ENCODE measurements at regions of chr10 and their contacts with region 1.

Region 1: GRCh38 chr10:87861953-87862678 is 1.2 kb downstream of the KLLN start:
- DNase-seq: peak; percentile 85 to 95 (median 93)
- ATAC-seq: peak; percentile 86
- H3K4me3 ChIP-seq: peak overlapping the region; percentile 90
- H3K4me3 Mint-ChIP-seq: peak overlapping the region; percentile 91 to 100 (median 96)
- H3K27ac ChIP-seq: peak overlapping the region; percentile 75
- H3K27ac Mint-ChIP-seq: peak overlapping the region; percentile 90 to 99 (median 97)
- H3K4me1 ChIP-seq: peaks cover 6 to 16% of the 10 kb centered on the region in 2 donors
- H3K4me1 Mint-ChIP-seq: peaks cover 25 to 36% (median 32%) of the 10 kb centered on the region in 7 donors
- H3K27me3 ChIP-seq: no peaks in the 10 kb centered on the region
- H3K27me3 Mint-ChIP-seq: no peaks in the 10 kb centered on the region

Region 2: GRCh38 chr10:87817609-87818504 is 44.3 kb before region 1 on chr10 and contains the start of gene ATAD1:
- CTCF ChIA-PET with region 1: interaction called, 5 read pairs
- POLR2A ChIA-PET with region 1: interaction called, 72 read pairs
- intact Hi-C with region 1: loop called (anchors 1 kb)
- DNase-seq: peak; percentile 79 to 93 (median 91)
- ATAC-seq: peak; percentile 92
- H3K4me3 ChIP-seq: peak within 1 kb of the TSS; percentile 75
- H3K4me3 Mint-ChIP-seq: peak within 1 kb of the TSS; percentile 90 to 100 (median 94)
- H3K27ac ChIP-seq: peak within 1 kb of the TSS; percentile 89
- H3K27ac Mint-ChIP-seq: peak within 1 kb of the TSS; percentile 93 to 100 (median 98)
- H3K4me1 ChIP-seq: peaks cover 13 to 33% of the 10 kb centered on the region in 2 donors
- H3K4me1 Mint-ChIP-seq: peaks cover 22 to 56% (median 41%) of the 10 kb centered on the region in 7 donors
- H3K27me3 ChIP-seq: no peaks in the 10 kb centered on the region
- H3K27me3 Mint-ChIP-seq: peaks cover 0 to 2% (median 0%) of the 10 kb centered on the region in 5 donors
- total RNA-seq, gene ATAD1: 33.5 to 53.4 (median 46.1) TPM

Region 3: DNA sequence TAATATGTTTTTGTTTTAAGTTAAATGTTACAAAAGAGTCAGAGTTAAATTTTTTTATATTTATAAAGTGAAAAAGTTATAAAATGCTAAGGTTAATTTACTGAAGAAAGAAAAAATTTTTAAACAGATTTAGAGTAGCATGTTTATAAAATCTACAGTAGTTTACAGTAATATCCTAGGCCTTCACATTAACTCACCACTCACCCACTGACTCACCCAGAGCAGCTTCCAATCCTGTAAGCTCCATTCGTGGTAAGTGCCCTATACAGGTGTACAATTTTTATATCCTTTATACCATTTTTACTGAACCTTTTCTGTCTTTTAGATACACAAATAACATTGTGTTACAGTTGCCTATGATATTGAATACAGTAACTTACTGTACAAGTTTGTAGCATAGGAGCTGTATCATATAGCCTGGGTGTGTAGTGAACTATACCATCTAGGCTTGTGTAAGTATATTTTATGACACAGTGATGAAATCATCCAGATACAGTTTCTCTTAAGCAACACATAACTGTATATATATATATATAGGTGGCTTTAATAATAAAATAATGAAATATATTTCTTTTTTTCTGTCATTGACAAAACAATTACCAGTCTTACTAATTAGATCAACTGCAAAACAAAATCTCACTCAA is 80.9 kb after region 1 on chr10:
- CTCF ChIA-PET with region 1: no interaction called
- POLR2A ChIA-PET with region 1: interaction called, 5 read pairs
- intact Hi-C with region 1: loop called (anchors 5 kb)
- DNase-seq: no peak
- ATAC-seq: no peak
- H3K4me3 ChIP-seq: no peak overlapping the region
- H3K4me3 Mint-ChIP-seq: no peak overlapping the region
- H3K27ac ChIP-seq: no peak overlapping the region
- H3K27ac Mint-ChIP-seq: no peak overlapping the region
- H3K4me1 ChIP-seq: no peaks in the 10 kb centered on the region
- H3K4me1 Mint-ChIP-seq: peaks cover 4 to 50% (median 40%) of the 10 kb centered on the region in 7 donors
- H3K27me3 ChIP-seq: no peaks in the 10 kb centered on the region
- H3K27me3 Mint-ChIP-seq: no peaks in the 10 kb centered on the region

Region 4: DNA sequence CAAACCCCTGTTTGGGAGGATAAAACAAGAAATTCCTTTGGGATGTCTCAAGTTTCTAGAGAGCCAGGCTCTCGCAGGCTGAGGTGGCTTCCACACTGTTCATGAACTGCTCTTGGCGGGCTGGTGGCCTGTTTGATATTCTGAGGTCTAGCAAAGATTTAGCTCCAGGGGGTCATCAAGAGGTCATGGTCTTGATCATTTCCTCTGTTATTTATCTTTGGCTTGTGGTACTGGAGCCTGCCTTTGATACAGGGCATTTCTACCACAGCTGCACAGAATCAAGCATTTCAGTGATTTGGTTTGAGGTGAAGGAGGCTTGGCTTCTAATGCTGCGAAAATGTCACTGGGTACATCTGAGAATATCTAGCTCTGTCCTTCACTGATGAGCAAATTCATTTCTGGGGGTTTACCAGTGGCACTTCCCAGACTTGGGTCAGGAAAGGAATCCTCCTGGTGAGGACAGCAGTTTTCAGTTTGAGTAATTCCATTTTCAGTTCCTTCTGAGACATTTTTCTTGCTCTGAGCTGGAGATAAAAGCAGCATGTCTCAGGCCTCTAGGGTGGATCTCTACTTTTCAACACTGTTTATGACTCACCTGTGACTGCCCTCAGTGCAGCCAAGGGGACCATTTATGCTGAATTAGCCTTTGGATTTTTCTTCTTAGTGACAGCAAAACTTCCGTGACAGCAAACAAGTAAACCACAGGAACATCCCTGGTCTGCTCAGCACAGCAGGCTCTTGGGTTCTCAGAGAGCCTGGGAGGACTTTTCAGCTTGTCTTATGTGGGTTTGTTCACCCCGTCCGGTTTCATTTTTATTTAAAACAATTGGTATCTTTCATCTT is 409.0 kb after region 1 on chr10:
- CTCF ChIA-PET with region 1: no interaction called
- POLR2A ChIA-PET with region 1: interaction called, 3 read pairs
- intact Hi-C with region 1: loop called (anchors 2 kb)
- DNase-seq: peak in 7 of 9 donors; percentile 8 to 54 (median 26)
- ATAC-seq: peak; percentile 79
- H3K4me3 ChIP-seq: peak overlapping the region; percentile 12
- H3K4me3 Mint-ChIP-seq: peak overlapping the region; percentile 29 to 78 (median 66)
- H3K27ac ChIP-seq: peak overlapping the region; percentile 33
- H3K27ac Mint-ChIP-seq: peak overlapping the region; percentile 44 to 89 (median 83)
- H3K4me1 ChIP-seq: peaks cover 13 to 18% of the 10 kb centered on the region in 2 donors
- H3K4me1 Mint-ChIP-seq: peaks cover 23 to 65% (median 38%) of the 10 kb centered on the region in 7 donors
- H3K27me3 ChIP-seq: no peaks in the 10 kb centered on the region
- H3K27me3 Mint-ChIP-seq: peaks cover 0 to 8% (median 0%) of the 10 kb centered on the region in 5 donors

Region 5: GRCh38 chr10:88361494-88361893 is 499.4 kb after region 1 on chr10:
- CTCF ChIA-PET with region 1: no interaction called
- POLR2A ChIA-PET with region 1: no interaction called
- intact Hi-C with region 1: no loop called
- DNase-seq: no peak
- ATAC-seq: no peak
- H3K4me3 ChIP-seq: no peak overlapping the region
- H3K4me3 Mint-ChIP-seq: no peak overlapping the region
- H3K27ac ChIP-seq: no peak overlapping the region
- H3K27ac Mint-ChIP-seq: no peak overlapping the region
- H3K4me1 ChIP-seq: no peaks in the 10 kb centered on the region
- H3K4me1 Mint-ChIP-seq: peaks cover 0 to 6% (median 0%) of the 10 kb centered on the region in 7 donors
- H3K27me3 ChIP-seq: no peaks in the 10 kb centered on the region
- H3K27me3 Mint-ChIP-seq: peaks cover 0 to 2% (median 0%) of the 10 kb centered on the region in 5 donors

Region 6: DNA sequence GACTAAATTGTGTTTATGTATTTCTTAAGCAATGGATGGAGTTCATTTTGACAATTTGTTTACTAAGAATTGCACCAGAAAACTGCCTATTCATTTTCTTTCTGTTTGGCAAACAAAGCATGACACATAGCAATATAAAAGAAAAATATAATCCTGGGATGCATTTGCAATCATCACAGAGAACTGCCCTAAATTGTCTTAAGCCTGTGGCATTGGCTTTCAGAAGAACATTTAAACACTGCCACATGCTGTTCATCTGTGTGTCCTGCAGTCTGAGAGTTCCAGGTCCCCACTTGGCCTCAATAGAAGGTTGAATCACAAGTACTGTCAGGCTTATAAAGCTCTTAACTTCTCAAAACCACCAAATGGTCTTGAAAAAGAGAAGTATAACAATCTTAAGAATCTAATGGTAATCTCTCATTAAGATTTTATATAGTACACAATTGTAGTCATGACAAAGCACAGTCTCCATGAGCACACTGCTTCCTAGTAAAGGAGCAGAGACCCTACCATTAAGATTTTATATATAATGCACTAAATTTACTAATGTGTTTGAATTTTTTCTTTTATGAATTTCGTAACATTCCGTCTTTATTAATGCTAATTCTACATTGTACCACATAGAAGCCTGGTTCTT is 691.1 kb after region 1 on chr10:
- CTCF ChIA-PET with region 1: interaction called, 6 read pairs
- POLR2A ChIA-PET with region 1: interaction called, 4 read pairs
- intact Hi-C with region 1: loop called (anchors 1 kb)
- DNase-seq: peak in 7 of 9 donors; percentile 26 to 59 (median 53)
- ATAC-seq: peak; percentile 89
- H3K4me3 ChIP-seq: no peak overlapping the region
- H3K4me3 Mint-ChIP-seq: no peak overlapping the region
- H3K27ac ChIP-seq: no peak overlapping the region
- H3K27ac Mint-ChIP-seq: no peak overlapping the region
- H3K4me1 ChIP-seq: no peaks in the 10 kb centered on the region
- H3K4me1 Mint-ChIP-seq: peaks cover 0 to 2% (median 0%) of the 10 kb centered on the region in 7 donors
- H3K27me3 ChIP-seq: no peaks in the 10 kb centered on the region
- H3K27me3 Mint-ChIP-seq: peaks cover 0 to 11% (median 0%) of the 10 kb centered on the region in 5 donors

Region 7: DNA sequence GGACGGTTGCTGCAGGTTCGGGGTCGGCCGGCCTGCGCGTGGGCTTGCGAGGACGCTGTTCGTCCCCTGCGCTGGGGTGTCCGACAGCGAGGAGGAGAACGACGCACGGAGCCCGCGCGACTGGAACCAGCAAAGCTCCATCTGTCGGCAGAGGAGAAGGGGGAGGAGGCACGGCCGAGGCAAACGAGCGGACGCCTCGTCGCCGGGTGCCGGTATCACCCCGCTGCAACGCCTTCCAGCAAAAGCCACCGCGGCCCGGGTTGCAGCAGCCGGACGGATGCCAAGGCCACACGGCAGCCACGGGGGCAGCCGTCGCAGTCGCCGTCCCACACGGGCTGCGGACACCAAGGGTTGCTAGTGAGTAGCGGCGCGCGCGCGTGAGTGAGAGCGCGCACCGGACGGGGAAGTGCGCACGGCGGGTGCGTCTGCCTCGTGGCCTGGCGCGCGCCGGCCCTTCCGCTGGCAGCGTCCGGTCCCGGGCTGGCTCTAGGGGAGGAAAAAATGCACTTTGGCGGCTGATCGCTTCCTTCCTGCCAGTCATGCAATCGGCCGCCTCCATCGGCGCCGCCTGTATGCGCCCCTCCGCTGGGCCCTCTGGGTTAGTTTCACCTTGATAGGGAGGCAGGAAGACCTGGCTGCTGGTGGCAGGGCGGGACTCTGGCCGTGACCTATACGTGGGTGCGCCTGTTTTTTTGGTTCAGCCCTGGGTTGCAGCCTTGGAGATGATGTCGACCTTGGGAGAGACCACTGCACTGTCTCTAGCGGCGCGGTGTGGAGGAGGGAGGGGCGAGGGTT is 1018.4 kb after region 1 on chr10:
- CTCF ChIA-PET with region 1: interaction called, 5 read pairs
- POLR2A ChIA-PET with region 1: interaction called, 6 read pairs
- intact Hi-C with region 1: loop called (anchors 1 to 2 kb)
- DNase-seq: peak; percentile 58 to 79 (median 75)
- ATAC-seq: peak; percentile 84
- H3K4me3 ChIP-seq: peak overlapping the region; percentile 85
- H3K4me3 Mint-ChIP-seq: peak overlapping the region; percentile 95 to 100 (median 98)
- H3K27ac ChIP-seq: peak overlapping the region; percentile 74
- H3K27ac Mint-ChIP-seq: peak overlapping the region; percentile 82 to 97 (median 95)
- H3K4me1 ChIP-seq: peaks cover 43 to 44% of the 10 kb centered on the region in 2 donors
- H3K4me1 Mint-ChIP-seq: peaks cover 43 to 79% (median 69%) of the 10 kb centered on the region in 7 donors
- H3K27me3 ChIP-seq: no peaks in the 10 kb centered on the region
- H3K27me3 Mint-ChIP-seq: no peaks in the 10 kb centered on the region

Region 8: GRCh38 chr10:89414146-89414878 is 1552.2 kb after region 1 on chr10 and contains the start of gene IFIT5:
- CTCF ChIA-PET with region 1: no interaction called
- POLR2A ChIA-PET with region 1: no interaction called
- intact Hi-C with region 1: loop called in 1 of 2 experiments (anchors 2 kb)
- DNase-seq: peak; percentile 62 to 83 (median 76)
- ATAC-seq: peak; percentile 88
- H3K4me3 ChIP-seq: peak within 1 kb of the TSS; percentile 77
- H3K4me3 Mint-ChIP-seq: peak within 1 kb of the TSS; percentile 90 to 100 (median 96)
- H3K27ac ChIP-seq: peak within 1 kb of the TSS; percentile 94
- H3K27ac Mint-ChIP-seq: peak within 1 kb of the TSS; percentile 96 to 100 (median 98)
- H3K4me1 ChIP-seq: peaks cover 21% of the 10 kb centered on the region in 2 donors
- H3K4me1 Mint-ChIP-seq: peaks cover 26 to 75% (median 65%) of the 10 kb centered on the region in 7 donors
- H3K27me3 ChIP-seq: no peaks in the 10 kb centered on the region
- H3K27me3 Mint-ChIP-seq: no peaks in the 10 kb centered on the region
- total RNA-seq, gene IFIT5: 13.1 to 34.0 (median 24.8) TPM